ENCODE measurements at regions of chr11 and their contacts with region 1.

Region 1: DNA sequence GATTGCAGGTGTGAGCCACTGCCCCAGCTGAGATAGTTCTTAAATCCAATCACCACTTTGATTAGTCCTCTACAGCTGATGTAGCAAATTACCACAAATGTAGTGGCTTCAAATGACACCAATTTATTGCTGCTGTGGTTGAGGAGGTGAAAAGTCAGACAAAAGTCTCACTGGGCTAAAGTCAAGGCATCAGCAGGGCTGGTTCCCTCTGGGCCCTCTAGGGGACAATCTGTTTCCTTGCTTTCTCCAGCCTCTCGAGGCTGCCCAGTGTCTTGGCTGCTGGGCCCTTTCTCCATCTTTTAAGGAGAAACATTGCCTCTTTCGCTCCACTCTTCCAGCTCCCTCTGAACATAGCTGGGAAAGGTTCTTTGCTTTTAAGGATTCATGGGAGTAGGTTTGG is 50.5 kb upstream of the SHANK2 start:
- DNase-seq: peak in 1 of 2 experiments; percentile 46
- H3K4me3 ChIP-seq: no peak overlapping the region
- H3K4me3 Mint-ChIP-seq: no peak overlapping the region
- H3K27ac Mint-ChIP-seq: no peak overlapping the region
- H3K4me1 ChIP-seq: peaks cover 35% of the 10 kb centered on the region
- H3K4me1 Mint-ChIP-seq: peaks cover 27% of the 10 kb centered on the region
- H3K27me3 ChIP-seq: no peaks in the 10 kb centered on the region
- H3K27me3 Mint-ChIP-seq: no peaks in the 10 kb centered on the region
- CTCF ChIP-seq: peak; percentile 39 to 62

Region 2: GRCh38 chr11:71170676-71171423 is 132.1 kb before region 1 on chr11:
- CTCF ChIA-PET with region 1: no interaction called
- POLR2A ChIA-PET with region 1: no interaction called
- intact Hi-C with region 1: no loop called
- DNase-seq: peak in 1 of 2 experiments; percentile 32
- H3K4me3 ChIP-seq: no peak overlapping the region
- H3K4me3 Mint-ChIP-seq: no peak overlapping the region
- H3K27ac Mint-ChIP-seq: no peak overlapping the region
- H3K4me1 ChIP-seq: no peaks in the 10 kb centered on the region
- H3K4me1 Mint-ChIP-seq: peaks cover 6% of the 10 kb centered on the region
- H3K27me3 ChIP-seq: no peaks in the 10 kb centered on the region
- H3K27me3 Mint-ChIP-seq: no peaks in the 10 kb centered on the region
- CTCF ChIP-seq: no peak

Region 3: GRCh38 chr11:71342951-71343827 is 40.3 kb after region 1 on chr11:
- CTCF ChIA-PET with region 1: no interaction called
- POLR2A ChIA-PET with region 1: no interaction called
- intact Hi-C with region 1: loop called (anchors 1 kb)
- DNase-seq: peak; percentile 84 to 85
- H3K4me3 ChIP-seq: no peak overlapping the region
- H3K4me3 Mint-ChIP-seq: no peak overlapping the region
- H3K27ac Mint-ChIP-seq: no peak overlapping the region
- H3K4me1 ChIP-seq: peaks cover 8% of the 10 kb centered on the region; the same call in 1 of the 2 replicates
- H3K4me1 Mint-ChIP-seq: peaks cover 6% of the 10 kb centered on the region
- H3K27me3 ChIP-seq: no peaks in the 10 kb centered on the region
- H3K27me3 Mint-ChIP-seq: peaks cover 9% of the 10 kb centered on the region
- CTCF ChIP-seq: peak; percentile 87 to 94

Measured in Caco-2 (cell line).